Endothelial cell of umbilical vein (primary cell): ENCODE measurements at regions of chr11 and their contacts with region 1.

Region 1: DNA sequence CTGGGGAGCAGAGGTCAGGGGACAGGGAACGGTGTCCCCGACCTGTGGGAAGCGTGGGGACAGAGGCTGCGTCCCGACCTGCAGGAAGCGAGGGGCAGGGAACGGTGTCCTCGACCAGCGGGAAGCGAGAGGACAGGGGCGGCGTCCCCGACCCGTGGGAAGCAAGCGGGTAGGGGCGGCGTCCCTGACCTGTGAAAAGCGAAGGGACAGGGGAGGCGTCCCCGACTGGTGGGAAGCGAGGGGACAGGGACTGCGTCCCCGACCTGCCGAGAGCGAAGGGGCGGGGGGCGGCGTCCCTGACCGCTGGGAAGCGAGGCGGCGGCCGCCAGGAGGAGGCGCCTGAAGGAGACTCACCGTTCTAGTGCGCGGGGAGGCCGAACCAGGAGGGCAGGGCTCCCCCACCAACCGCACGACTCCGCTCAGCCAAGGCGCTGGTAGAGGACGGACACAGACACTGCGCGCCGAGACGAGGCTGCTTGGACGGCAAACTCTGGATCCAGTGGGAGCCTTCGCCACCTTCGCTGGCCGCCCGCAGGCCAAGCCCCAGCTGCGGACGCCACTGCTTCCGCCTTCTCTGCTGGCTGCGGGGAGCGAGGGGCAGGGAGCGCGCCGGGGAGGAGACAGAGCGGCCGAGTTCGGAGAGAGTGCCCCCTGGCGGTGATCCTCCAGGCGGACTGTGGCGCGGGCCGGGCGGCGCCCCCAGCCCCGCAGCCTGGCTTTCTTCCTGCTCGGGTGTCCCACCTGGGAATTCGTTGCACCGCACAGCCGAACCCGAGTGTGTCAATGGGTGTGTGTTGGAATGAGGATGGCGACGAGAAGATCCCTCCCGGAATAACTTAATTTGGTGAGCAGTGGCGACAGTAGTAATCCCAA is at the start of gene TRAF6:
- DNase-seq: peak; percentile 91
- H3K4me3 ChIP-seq: peak within 1 kb of the TSS; percentile 77 to 100 (median 88)
- H3K27ac ChIP-seq: peak within 1 kb of the TSS; percentile 50
- H3K4me1 ChIP-seq: peaks cover 16% of the 10 kb centered on the region
- H3K27me3 ChIP-seq: no peaks in the 10 kb centered on the region
- CTCF ChIP-seq: peak; percentile 90 to 92
- POLR2A ChIP-seq: peak; percentile 94
- total RNA-seq, gene TRAF6: 13.1 and 14.2 TPM in 2 replicates

Region 2: GRCh38 chr11:34977089-34977906 is 1532.6 kb before region 1 on chr11:
- CTCF ChIA-PET with region 1: no interaction called
- POLR2A ChIA-PET with region 1: no interaction called
- dilution Hi-C with region 1: no loop called
- intact Hi-C with region 1: loop called (anchors 10 kb)
- DNase-seq: peak; percentile 79
- H3K4me3 ChIP-seq: peak overlapping the region in 2 of 3 experiments; percentile 23 to 42
- H3K27ac ChIP-seq: peak overlapping the region; percentile 75
- H3K4me1 ChIP-seq: peaks cover 41% of the 10 kb centered on the region
- H3K27me3 ChIP-seq: no peaks in the 10 kb centered on the region
- CTCF ChIP-seq: no peak
- POLR2A ChIP-seq: no peak

Region 3: GRCh38 chr11:36408498-36409136 is 101.3 kb before region 1 on chr11:
- CTCF ChIA-PET with region 1: no interaction called
- POLR2A ChIA-PET with region 1: no interaction called
- dilution Hi-C with region 1: no loop called
- intact Hi-C with region 1: no loop called
- DNase-seq: no peak
- H3K4me3 ChIP-seq: no peak overlapping the region
- H3K27ac ChIP-seq: peak overlapping the region; percentile 9
- H3K4me1 ChIP-seq: peaks cover 44% of the 10 kb centered on the region
- H3K27me3 ChIP-seq: no peaks in the 10 kb centered on the region
- CTCF ChIP-seq: no peak
- POLR2A ChIP-seq: no peak

Region 4: GRCh38 chr11:36541001-36541400 is 31.1 kb after region 1 on chr11:
- CTCF ChIA-PET with region 1: interaction called, 14 read pairs
- POLR2A ChIA-PET with region 1: no interaction called
- dilution Hi-C with region 1: no loop called
- intact Hi-C with region 1: loop called (anchors 1 kb)
- DNase-seq: peak; percentile 67
- H3K4me3 ChIP-seq: no peak overlapping the region
- H3K27ac ChIP-seq: no peak overlapping the region
- H3K4me1 ChIP-seq: peaks cover 3% of the 10 kb centered on the region
- H3K27me3 ChIP-seq: peaks cover 4 to 6% of the 10 kb centered on the region in 2 experiments
- CTCF ChIP-seq: peak; percentile 30 to 46
- POLR2A ChIP-seq: no peak

Region 5: DNA sequence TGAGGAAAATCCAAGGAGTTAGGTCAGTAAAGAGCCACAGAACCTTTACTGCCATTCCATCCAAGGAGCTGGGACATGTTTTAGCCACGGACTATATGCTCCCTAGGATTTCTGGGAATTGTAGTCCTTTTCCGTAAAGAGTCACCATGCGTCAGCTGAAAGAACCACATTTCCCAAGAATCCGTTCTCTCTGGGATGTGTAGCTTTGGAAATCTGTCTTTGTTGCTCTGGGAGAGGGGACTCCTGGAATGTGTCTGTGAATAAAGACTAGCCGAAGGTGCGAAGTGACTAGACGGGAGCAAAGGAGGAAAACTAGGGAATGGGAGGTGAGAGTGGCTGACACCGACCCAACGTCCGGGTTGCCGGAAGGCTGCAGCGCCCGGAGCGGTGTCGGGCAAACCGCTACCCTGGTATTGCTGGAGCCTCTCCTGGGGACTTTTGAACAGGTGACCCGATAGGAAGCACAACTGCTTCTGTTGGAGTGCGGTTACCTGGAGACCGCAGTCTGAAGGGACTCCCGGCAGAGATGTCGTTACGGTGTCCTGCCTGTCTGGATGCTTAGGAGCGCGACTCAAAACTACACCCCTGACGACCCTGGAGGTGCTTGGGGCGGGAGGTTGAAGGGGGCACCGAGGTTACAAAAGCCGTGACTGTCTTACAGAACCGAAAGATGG is 84.5 kb after region 1 on chr11 and contains the start of gene IFTAP:
- CTCF ChIA-PET with region 1: no interaction called
- POLR2A ChIA-PET with region 1: no interaction called
- dilution Hi-C with region 1: no loop called
- intact Hi-C with region 1: loop called (anchors 1 kb)
- DNase-seq: peak; percentile 94
- H3K4me3 ChIP-seq: peak within 1 kb of the TSS; percentile 80 to 89 (median 87)
- H3K27ac ChIP-seq: peak within 1 kb of the TSS; percentile 6
- H3K4me1 ChIP-seq: peaks cover 5% of the 10 kb centered on the region
- H3K27me3 ChIP-seq: peaks cover 4 to 18% of the 10 kb centered on the region in 2 experiments
- CTCF ChIP-seq: no peak
- POLR2A ChIP-seq: peak; percentile 44
- total RNA-seq, gene IFTAP: 19.5 and 19.6 TPM in 2 replicates

Region 6: GRCh38 chr11:36631774-36632173 is 121.8 kb after region 1 on chr11:
- CTCF ChIA-PET with region 1: no interaction called
- POLR2A ChIA-PET with region 1: no interaction called
- dilution Hi-C with region 1: no loop called
- intact Hi-C with region 1: no loop called
- DNase-seq: no peak
- H3K4me3 ChIP-seq: no peak overlapping the region
- H3K27ac ChIP-seq: no peak overlapping the region
- H3K4me1 ChIP-seq: no peaks in the 10 kb centered on the region
- H3K27me3 ChIP-seq: no peaks in the 10 kb centered on the region
- CTCF ChIP-seq: no peak
- POLR2A ChIP-seq: no peak

Region 7: DNA sequence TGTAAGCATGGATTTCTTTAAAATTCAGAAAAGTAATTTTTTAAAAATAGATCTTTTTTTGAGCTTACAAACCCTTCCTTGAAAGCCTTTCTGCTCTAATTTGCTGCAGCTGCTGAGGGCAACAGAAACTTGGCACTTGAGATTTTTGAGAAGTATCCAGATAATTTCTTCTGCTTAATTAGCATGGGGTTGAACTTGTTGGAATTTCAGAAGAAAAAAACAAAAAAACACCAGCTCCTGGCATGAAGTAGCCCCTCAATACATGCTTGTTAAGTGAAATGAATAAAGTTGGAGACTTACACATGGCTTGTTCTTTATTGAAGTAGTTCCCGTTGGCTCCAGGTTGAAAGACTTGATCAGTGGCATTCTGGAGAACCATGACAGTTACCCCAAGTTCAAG is 419.5 kb after region 1 on chr11:
- CTCF ChIA-PET with region 1: no interaction called
- POLR2A ChIA-PET with region 1: no interaction called
- dilution Hi-C with region 1: no loop called
- intact Hi-C with region 1: no loop called
- DNase-seq: no peak
- H3K4me3 ChIP-seq: no peak overlapping the region
- H3K27ac ChIP-seq: no peak overlapping the region
- H3K4me1 ChIP-seq: no peaks in the 10 kb centered on the region
- H3K27me3 ChIP-seq: no peaks in the 10 kb centered on the region
- CTCF ChIP-seq: no peak
- POLR2A ChIP-seq: no peak